ENCODE measurements at regions of chr10 and their contacts with region 1.

Region 1: DNA sequence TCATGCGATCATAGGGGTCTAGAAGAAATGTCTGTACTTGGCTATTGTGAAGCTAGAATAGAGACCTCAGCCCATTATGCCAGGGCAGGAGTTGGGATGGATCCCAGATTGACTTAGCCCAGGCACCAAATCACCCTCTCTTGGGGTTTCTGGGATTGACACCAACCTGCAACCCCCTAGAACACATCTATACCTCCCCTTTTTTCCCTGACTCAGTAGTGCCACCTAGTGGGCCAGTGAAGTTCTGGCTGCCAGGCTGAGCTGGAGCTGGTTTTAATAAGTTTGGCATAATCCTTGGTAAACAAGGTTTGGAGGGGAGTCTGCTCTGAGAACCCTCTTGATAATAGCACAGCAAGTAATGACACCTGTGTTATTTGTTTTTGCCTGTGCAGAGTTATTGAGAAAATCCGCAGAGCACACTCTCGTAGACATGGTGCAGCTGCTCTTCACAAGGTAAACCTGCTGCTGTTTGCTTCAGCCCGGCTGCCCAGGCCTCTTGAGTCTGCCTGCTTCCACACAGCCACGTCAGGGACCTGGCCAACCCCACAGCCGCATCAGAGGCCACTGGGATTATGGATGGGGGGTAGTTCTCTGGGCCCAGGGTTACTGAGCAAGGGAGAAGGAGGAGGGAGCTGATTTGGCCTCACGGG is 43.3 kb upstream of the NFKB2 start:
- DNase-seq: peak; percentile 32 to 53
- ATAC-seq: peak in 7 of 8 donors; percentile 46 to 78 (median 52)
- H3K4me3 ChIP-seq: no peak overlapping the region
- H3K27ac ChIP-seq: no peak overlapping the region
- H3K4me1 ChIP-seq: peaks cover 0 to 9% (median 0%) of the 10 kb centered on the region in 9 donors
- H3K27me3 ChIP-seq: no peaks in the 10 kb centered on the region
- CTCF ChIP-seq: peak; percentile 73 to 95 (median 90)

Region 2: DNA sequence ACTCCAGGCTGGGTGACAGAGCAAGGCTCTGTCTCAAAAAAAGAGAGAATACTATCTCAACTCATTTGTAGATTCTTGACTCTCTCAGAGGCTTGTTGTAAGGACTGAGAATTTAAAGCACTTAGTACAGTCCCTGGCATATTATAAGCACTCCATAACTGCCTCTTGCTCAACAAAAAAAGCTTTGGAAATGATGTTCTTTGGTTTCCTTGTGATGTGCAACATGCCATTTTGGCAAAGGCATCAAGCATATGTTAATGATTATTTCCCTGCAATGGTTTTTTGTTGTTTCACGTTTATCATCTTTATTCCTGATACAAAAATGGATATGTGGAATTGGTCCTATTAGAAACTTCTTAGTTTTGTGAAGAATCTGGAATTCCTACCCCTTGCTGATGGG is 184.3 kb before region 1 on chr10:
- intact Hi-C with region 1: loop called in 8 of 10 experiments (anchors 2 to 10 kb)
- DNase-seq: no peak
- ATAC-seq: no peak
- H3K4me3 ChIP-seq: no peak overlapping the region
- H3K27ac ChIP-seq: no peak overlapping the region
- H3K4me1 ChIP-seq: peaks cover 0 to 12% (median 4%) of the 10 kb centered on the region in 9 donors
- H3K27me3 ChIP-seq: no peaks in the 10 kb centered on the region
- CTCF ChIP-seq: no peak

Region 3: DNA sequence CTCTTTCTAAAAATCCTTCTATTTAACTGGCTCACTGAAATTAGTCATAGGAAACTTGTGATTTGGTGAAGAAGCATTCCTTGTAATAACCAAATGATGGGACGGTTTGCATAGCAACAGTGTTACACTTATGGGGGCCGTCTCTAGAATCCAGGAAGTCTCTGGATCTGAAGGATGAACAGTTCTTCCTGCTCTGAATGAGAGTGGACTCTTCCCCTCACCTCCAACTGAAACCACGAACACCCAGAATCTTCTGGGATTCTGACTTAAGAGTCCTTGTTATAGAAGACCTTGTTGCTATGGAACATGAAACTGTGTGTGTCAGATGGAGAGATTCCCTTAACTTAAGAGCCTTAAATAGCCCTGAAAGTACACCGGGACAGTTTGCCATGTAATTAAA is 176.8 kb before region 1 on chr10:
- intact Hi-C with region 1: loop called in 2 of 10 experiments (anchors 5 kb)
- DNase-seq: no peak
- ATAC-seq: no peak
- H3K4me3 ChIP-seq: no peak overlapping the region
- H3K27ac ChIP-seq: no peak overlapping the region
- H3K4me1 ChIP-seq: no peaks in the 10 kb centered on the region
- H3K27me3 ChIP-seq: peaks cover 0 to 9% (median 0%) of the 10 kb centered on the region in 7 donors
- CTCF ChIP-seq: no peak

Region 4: DNA sequence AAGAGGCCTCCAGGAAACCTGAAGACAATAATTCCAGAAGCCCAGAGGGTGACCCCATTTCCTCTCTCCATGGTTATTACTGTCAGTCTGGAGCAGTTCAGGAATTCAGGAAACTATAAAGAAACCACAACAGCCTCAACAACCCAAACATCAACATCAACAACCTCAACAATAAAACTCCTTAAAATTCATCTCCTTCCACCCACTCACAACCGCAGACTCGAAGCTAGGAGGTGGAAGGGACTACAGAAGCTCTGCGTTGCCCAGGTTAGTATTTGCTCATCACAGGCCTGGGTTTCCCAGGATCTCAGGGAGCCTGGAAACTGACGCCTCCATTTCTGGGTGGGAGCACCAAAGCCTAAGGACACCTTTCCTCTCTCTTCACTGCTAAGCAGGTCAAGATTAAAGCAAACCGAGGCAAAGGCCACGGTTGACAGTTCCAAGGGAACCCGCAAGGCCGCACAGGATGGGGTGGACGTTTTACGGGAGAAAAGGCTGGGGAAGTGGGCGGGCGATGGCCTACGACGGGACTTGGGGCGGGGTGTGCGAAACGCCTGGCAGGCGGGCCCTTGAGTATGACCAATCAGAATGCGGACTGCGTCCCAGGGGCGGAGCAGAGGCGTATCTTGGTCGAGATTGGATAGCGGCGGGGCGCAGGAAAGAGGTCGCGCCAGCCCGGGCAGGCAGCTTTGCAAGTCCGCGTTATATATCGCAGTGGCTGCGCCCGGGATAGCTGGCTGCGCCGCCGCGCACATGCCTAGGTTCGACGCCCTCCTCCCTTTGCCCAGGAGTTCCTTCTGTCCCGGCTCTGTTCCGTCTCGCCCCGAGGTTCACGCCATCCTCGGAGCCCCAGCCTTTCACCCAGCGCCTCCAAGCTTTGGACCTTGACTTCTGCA is 126.3 kb before region 1 on chr10 and contains the start of gene ELOVL3:
- intact Hi-C with region 1: loop called (anchors 1 to 2 kb)
- DNase-seq: peak; percentile 93 to 96
- ATAC-seq: peak; percentile 93 to 98 (median 98)
- H3K4me3 ChIP-seq: peak within 1 kb of the TSS in 7 of 10 donors; percentile 18 to 49 (median 45)
- H3K27ac ChIP-seq: peak within 1 kb of the TSS; percentile 19 to 89 (median 74)
- H3K4me1 ChIP-seq: peaks cover 6 to 44% (median 23%) of the 10 kb centered on the region in 9 donors
- H3K27me3 ChIP-seq: peaks cover 0 to 27% (median 10%) of the 10 kb centered on the region in 7 donors
- CTCF ChIP-seq: peak in 3 of 9 donors; percentile 1 to 10 (median 5)
- total RNA-seq, gene ELOVL3: 0.22 to 0.45 (median 0.30) TPM in 3 of 10 donors, not detected in the others

Region 5: DNA sequence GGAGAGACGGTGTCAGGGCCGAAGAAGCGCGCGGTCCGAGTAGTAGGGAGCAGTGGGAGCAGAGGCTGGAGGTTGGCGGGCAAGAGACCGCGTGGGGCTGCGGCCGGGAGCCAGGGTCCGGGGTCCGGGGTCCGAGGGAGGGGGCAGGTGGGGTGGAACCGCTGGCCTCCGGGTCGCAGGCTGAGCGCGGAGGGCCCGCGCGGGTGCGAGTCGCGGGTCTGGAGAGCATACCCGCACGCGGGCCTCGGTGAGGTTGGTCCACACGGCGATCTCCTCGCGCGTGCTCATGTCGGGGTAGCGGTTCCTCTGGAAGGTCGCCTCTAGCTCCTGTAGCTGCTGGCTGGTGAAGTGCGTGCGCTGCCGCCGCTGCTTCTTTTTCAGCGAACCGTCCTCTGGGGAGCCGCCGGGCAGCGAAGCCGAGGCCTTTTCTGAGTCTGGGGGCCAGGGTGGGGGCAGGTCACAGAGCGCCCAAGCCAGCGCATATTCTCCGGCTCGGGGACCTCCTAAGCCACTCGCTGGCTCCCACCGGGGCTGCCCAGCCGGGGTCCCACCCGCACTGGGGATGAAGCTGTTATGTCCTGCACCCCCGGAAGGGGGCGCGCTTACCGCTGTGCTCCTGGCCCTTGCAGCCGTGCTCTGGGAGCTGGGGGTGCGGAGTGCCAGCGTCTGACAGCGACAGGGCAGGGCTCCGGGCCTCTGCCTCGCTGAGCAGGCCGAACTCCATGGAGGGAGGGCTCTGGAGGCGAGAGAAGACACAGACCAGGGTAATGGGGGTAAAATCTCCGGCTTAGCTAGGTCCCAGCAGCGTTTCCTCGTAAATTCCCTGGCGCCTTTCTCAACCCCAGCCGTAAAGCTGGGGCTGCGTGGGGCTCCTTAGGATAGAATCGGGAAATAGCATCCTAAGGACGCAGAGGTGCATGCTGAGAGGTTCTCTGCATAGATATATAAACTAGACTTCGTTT is 120.6 kb before region 1 on chr10:
- intact Hi-C with region 1: loop called (anchors 1 to 2 kb)
- DNase-seq: peak; percentile 20 to 57
- ATAC-seq: peak in 7 of 8 donors; percentile 10 to 48 (median 33)
- H3K4me3 ChIP-seq: peak overlapping the region; percentile 13 to 57 (median 42)
- H3K27ac ChIP-seq: no peak overlapping the region
- H3K4me1 ChIP-seq: peaks cover 5 to 40% (median 18%) of the 10 kb centered on the region in 9 donors
- H3K27me3 ChIP-seq: peaks cover 0 to 69% (median 36%) of the 10 kb centered on the region in 7 donors
- CTCF ChIP-seq: peak; percentile 24 to 84 (median 66)

Region 6: GRCh38 chr10:102384053-102384452 is 31.9 kb after region 1 on chr10:
- intact Hi-C with region 1: no loop called
- DNase-seq: no peak
- ATAC-seq: peak in 1 of 8 donors; percentile 47
- H3K4me3 ChIP-seq: no peak overlapping the region
- H3K27ac ChIP-seq: no peak overlapping the region
- H3K4me1 ChIP-seq: peaks cover 0 to 14% (median 0%) of the 10 kb centered on the region in 9 donors
- H3K27me3 ChIP-seq: no peaks in the 10 kb centered on the region
- CTCF ChIP-seq: peak in 2 of 9 donors; percentile 15 to 16